SK-N-SH (cell line): ENCODE measurements at regions of chr19 and their contacts with region 1.

Region 1: GRCh38 chr19:11374433-11375142 is at the start of gene SWSAP1:
- DNase-seq: peak; percentile 92
- H3K4me3 ChIP-seq: peak within 1 kb of the TSS; percentile 58 to 62
- H3K27ac ChIP-seq: peak within 1 kb of the TSS; percentile 88 to 94
- H3K4me1 ChIP-seq: peaks cover 16 to 22% of the 10 kb centered on the region in 2 experiments
- H3K27me3 ChIP-seq: no peaks in the 10 kb centered on the region
- CTCF ChIP-seq: no peak
- EP300 ChIP-seq: no peak
- RAD21 ChIP-seq: no peak
- polyA plus RNA-seq, gene SWSAP1: 2.8 and 3.0 TPM in 2 replicates

Region 2: GRCh38 chr19:11191273-11191755 is 183.3 kb before region 1 on chr19:
- CTCF ChIA-PET with region 1: no interaction called
- POLR2A ChIA-PET with region 1: no interaction called
- DNase-seq: peak; percentile 71
- H3K4me3 ChIP-seq: no peak overlapping the region
- H3K27ac ChIP-seq: no peak overlapping the region
- H3K4me1 ChIP-seq: peaks cover 5 to 20% of the 10 kb centered on the region in 2 experiments; a peak in 1 of 4 replicates
- H3K27me3 ChIP-seq: no peaks in the 10 kb centered on the region
- CTCF ChIP-seq: no peak
- EP300 ChIP-seq: no peak
- RAD21 ChIP-seq: no peak

Region 3: GRCh38 chr19:11346092-11346940 is 28.3 kb before region 1 on chr19 and contains the starts of genes CCDC159 and TMEM205:
- CTCF ChIA-PET with region 1: interaction called, 5 read pairs
- POLR2A ChIA-PET with region 1: interaction called, 15 read pairs
- DNase-seq: peak; percentile 95
- H3K4me3 ChIP-seq: peak within 1 kb of the TSS; percentile 74 to 96
- H3K27ac ChIP-seq: peak within 1 kb of the TSS; percentile 58 to 74
- H3K4me1 ChIP-seq: peaks cover 13 to 14% of the 10 kb centered on the region in 2 experiments; a peak in 2 of 4 replicates
- H3K27me3 ChIP-seq: no peaks in the 10 kb centered on the region
- CTCF ChIP-seq: peak; percentile 28; the same call in 1 of the 2 replicates
- EP300 ChIP-seq: no peak
- RAD21 ChIP-seq: no peak
- polyA plus RNA-seq, gene CCDC159: 25.2 and 30.1 TPM in 2 replicates
- polyA plus RNA-seq, gene TMEM205: 209 and 219 TPM in 2 replicates

Region 4: GRCh38 chr19:11405846-11406643 is 31.5 kb after region 1 on chr19:
- CTCF ChIA-PET with region 1: no interaction called
- POLR2A ChIA-PET with region 1: no interaction called
- DNase-seq: peak; percentile 20
- H3K4me3 ChIP-seq: no peak overlapping the region
- H3K27ac ChIP-seq: no peak overlapping the region
- H3K4me1 ChIP-seq: no peaks in the 10 kb centered on the region
- H3K27me3 ChIP-seq: no peaks in the 10 kb centered on the region
- CTCF ChIP-seq: no peak
- EP300 ChIP-seq: no peak
- RAD21 ChIP-seq: no peak

Region 5: GRCh38 chr19:11435058-11435832 is 60.7 kb after region 1 on chr19 and contains the starts of genes ODAD3 and PRKCSH:
- CTCF ChIA-PET with region 1: interaction called, 53 read pairs
- POLR2A ChIA-PET with region 1: interaction called, 14 read pairs
- DNase-seq: peak; percentile 96
- H3K4me3 ChIP-seq: peak within 1 kb of the TSS; percentile 69 to 83
- H3K27ac ChIP-seq: peak within 1 kb of the TSS; percentile 73
- H3K4me1 ChIP-seq: peaks cover 5 to 12% of the 10 kb centered on the region in 2 experiments; a peak in 1 of 4 replicates
- H3K27me3 ChIP-seq: no peaks in the 10 kb centered on the region
- CTCF ChIP-seq: peak; percentile 77
- EP300 ChIP-seq: no peak
- RAD21 ChIP-seq: peak; percentile 38; the same call in 1 of the 2 replicates
- polyA plus RNA-seq, gene ODAD3: 3.2 and 4.2 TPM in 2 replicates
- polyA plus RNA-seq, gene PRKCSH: 198 and 502 TPM in 2 replicates

Region 6: DNA sequence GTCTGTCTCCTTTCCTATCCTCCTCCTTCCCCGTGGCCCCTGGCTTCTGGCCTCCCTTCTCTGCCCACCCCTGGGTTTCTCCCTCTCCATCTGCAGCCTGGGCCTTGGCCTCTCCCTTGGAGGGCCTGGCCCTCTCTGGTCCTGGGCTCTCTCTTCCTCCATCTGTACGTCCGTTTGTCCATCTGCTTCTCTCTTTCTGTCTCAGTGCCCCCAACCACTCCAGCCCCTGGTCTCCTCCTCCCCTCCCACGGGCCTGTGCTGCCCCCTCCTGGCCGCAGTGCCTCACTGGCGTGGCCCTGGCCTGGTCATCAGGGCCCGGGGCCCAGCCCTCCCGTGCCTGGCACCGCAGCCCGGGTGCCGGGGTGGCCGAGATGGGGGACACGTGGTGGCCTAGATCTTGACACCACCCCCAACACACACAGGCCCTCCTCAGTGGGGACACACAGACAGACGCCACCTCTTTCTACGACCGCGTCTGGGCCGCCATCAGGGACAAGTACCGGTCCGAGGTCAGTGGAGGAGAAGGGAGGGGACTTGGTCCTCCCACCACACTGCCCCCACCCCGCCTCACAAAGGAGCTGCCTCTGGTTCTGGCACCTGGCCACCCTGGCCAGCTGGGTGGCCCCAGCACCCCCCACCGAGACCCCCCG is 72.2 kb after region 1 on chr19:
- CTCF ChIA-PET with region 1: interaction called, 53 read pairs
- POLR2A ChIA-PET with region 1: interaction called, 3 read pairs
- DNase-seq: peak; percentile 97
- H3K4me3 ChIP-seq: no peak overlapping the region; a peak in 1 of 4 replicates
- H3K27ac ChIP-seq: no peak overlapping the region
- H3K4me1 ChIP-seq: no peaks in the 10 kb centered on the region
- H3K27me3 ChIP-seq: no peaks in the 10 kb centered on the region
- CTCF ChIP-seq: peak; percentile 85
- EP300 ChIP-seq: no peak
- RAD21 ChIP-seq: peak; percentile 81

Region 7: DNA sequence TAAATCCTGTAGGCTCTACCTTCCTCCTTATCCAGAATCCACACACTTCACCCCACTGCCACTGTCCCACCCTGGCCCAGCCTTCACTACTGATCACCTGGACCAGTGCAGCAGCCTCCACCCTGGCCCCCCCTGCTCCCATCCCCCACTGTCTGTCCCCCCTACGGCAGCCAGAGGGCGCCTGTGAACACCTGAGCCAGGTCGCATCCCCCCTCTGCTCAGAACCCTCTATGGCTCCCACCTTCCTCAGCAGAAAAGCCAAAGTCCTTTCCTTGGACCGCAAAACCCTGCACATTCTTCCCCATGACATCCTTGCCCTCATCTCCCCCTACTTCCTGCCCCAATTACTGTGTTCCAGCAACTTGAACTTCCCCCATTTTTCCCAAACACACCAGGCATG is 85.6 kb after region 1 on chr19:
- CTCF ChIA-PET with region 1: no interaction called
- POLR2A ChIA-PET with region 1: no interaction called
- DNase-seq: peak; percentile 80
- H3K4me3 ChIP-seq: no peak overlapping the region
- H3K27ac ChIP-seq: no peak overlapping the region
- H3K4me1 ChIP-seq: no peaks in the 10 kb centered on the region
- H3K27me3 ChIP-seq: no peaks in the 10 kb centered on the region
- CTCF ChIP-seq: peak; percentile 28
- EP300 ChIP-seq: no peak
- RAD21 ChIP-seq: peak; percentile 17; the same call in 1 of the 2 replicates

Region 8: DNA sequence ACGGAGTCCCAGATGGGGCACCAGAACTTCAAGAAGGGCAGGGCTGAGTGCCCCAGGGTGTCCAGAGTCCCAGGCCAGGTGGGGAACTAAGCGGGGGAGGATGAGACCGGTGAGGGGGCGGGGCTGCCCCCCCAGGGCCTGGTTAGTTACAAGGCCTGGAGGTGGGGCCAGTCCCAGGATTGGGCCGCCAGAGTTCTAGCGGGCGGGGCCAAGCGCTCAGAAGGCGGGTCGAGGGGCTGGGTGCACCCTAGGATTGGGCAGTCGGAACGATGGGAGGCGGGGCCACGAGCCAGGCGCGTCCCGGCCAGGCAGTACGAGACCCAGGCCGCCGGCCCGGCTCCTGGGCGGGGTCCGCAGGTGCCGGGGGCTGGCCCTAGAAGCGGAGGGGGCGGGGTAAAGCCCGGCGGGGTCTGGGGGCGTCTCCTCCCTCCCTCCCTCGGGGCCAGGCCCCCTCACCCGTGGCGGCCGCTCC is 130.5 kb after region 1 on chr19:
- CTCF ChIA-PET with region 1: no interaction called
- POLR2A ChIA-PET with region 1: no interaction called
- DNase-seq: peak; percentile 98
- H3K4me3 ChIP-seq: peak overlapping the region; percentile 64 to 78
- H3K27ac ChIP-seq: peak overlapping the region; percentile 84 to 89
- H3K4me1 ChIP-seq: peaks cover 9 to 12% of the 10 kb centered on the region in 2 experiments; a peak in 2 of 4 replicates
- H3K27me3 ChIP-seq: no peaks in the 10 kb centered on the region
- CTCF ChIP-seq: no peak
- EP300 ChIP-seq: no peak
- RAD21 ChIP-seq: no peak